HCT116 (cell line): ENCODE measurements at regions of chr6 and their contacts with region 1.

Region 1: GRCh38 chr6:134111062-134111677 is 58.7 kb upstream of the SLC2A12 start:
- DNase-seq: peak; percentile 58
- ATAC-seq: peak; percentile 81
- H3K4me3 ChIP-seq: no peak overlapping the region
- H3K27ac ChIP-seq: no peak overlapping the region
- H3K4me1 ChIP-seq: no peaks in the 10 kb centered on the region
- H3K27me3 ChIP-seq: no peaks in the 10 kb centered on the region
- CTCF ChIP-seq: peak; percentile 87 to 99 (median 98)
- POLR2A ChIP-seq: no peak
- RAD21 ChIP-seq: peak; percentile 56

Region 2: GRCh38 chr6:133432021-133432989 is 678.9 kb before region 1 on chr6:
- CTCF ChIA-PET with region 1: no interaction called
- POLR2A ChIA-PET with region 1: no interaction called
- RAD21 ChIA-PET with region 1: no interaction called
- intact Hi-C with region 1: no loop called
- DNase-seq: no peak
- ATAC-seq: no peak
- H3K4me3 ChIP-seq: no peak overlapping the region
- H3K27ac ChIP-seq: no peak overlapping the region
- H3K4me1 ChIP-seq: no peaks in the 10 kb centered on the region
- H3K27me3 ChIP-seq: no peaks in the 10 kb centered on the region
- CTCF ChIP-seq: no peak
- POLR2A ChIP-seq: no peak
- RAD21 ChIP-seq: no peak

Region 3: GRCh38 chr6:134123666-134124208 is 12.6 kb after region 1 on chr6:
- CTCF ChIA-PET with region 1: interaction called, 27 read pairs
- POLR2A ChIA-PET with region 1: interaction called, 3 read pairs
- RAD21 ChIA-PET with region 1: no interaction called
- intact Hi-C with region 1: no loop called
- DNase-seq: peak; percentile 94
- ATAC-seq: peak; percentile 100
- H3K4me3 ChIP-seq: peak overlapping the region in 1 of 2 experiments; percentile 10; a peak in 1 of 4 replicates
- H3K27ac ChIP-seq: no peak overlapping the region
- H3K4me1 ChIP-seq: peaks cover 0 to 7% of the 10 kb centered on the region in 2 experiments; a peak in 1 of 4 replicates
- H3K27me3 ChIP-seq: no peaks in the 10 kb centered on the region
- CTCF ChIP-seq: peak; percentile 54 to 79 (median 66); a peak in 5 of 6 replicates
- POLR2A ChIP-seq: no peak
- RAD21 ChIP-seq: peak; percentile 35

Region 4: DNA sequence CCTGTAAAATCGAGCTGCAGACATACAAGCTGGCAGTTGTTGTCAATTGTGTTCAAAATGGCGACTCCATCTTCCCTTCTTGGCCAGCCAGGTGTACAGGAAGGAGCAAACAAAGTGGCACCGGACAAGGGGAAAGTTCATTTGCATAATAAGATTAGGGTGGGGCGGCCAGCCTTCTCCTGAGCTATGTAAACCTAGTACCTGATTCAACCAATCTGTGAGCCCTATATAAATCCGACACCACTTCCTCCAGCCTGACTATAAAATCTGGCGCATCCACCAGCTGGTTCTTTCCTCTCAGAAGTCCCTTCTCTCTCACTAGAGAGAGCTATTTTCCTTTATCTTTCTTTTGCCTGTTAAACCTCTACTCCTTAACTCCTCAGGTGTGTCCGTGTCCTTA is 951.6 kb after region 1 on chr6:
- CTCF ChIA-PET with region 1: no interaction called
- POLR2A ChIA-PET with region 1: no interaction called
- RAD21 ChIA-PET with region 1: no interaction called
- intact Hi-C with region 1: no loop called
- DNase-seq: no peak
- ATAC-seq: peak; percentile 34; the same call in 1 of the 2 replicates
- H3K4me3 ChIP-seq: no peak overlapping the region
- H3K27ac ChIP-seq: no peak overlapping the region
- H3K4me1 ChIP-seq: no peaks in the 10 kb centered on the region
- H3K27me3 ChIP-seq: no peaks in the 10 kb centered on the region
- CTCF ChIP-seq: no peak
- POLR2A ChIP-seq: no peak
- RAD21 ChIP-seq: 0 out of 2 replicates have a peak, but pooled peaks have one; percentile 9